Kidney (tissue), 22 donors: ENCODE measurements at regions of chr11 and their contacts with region 1.

Region 1: DNA sequence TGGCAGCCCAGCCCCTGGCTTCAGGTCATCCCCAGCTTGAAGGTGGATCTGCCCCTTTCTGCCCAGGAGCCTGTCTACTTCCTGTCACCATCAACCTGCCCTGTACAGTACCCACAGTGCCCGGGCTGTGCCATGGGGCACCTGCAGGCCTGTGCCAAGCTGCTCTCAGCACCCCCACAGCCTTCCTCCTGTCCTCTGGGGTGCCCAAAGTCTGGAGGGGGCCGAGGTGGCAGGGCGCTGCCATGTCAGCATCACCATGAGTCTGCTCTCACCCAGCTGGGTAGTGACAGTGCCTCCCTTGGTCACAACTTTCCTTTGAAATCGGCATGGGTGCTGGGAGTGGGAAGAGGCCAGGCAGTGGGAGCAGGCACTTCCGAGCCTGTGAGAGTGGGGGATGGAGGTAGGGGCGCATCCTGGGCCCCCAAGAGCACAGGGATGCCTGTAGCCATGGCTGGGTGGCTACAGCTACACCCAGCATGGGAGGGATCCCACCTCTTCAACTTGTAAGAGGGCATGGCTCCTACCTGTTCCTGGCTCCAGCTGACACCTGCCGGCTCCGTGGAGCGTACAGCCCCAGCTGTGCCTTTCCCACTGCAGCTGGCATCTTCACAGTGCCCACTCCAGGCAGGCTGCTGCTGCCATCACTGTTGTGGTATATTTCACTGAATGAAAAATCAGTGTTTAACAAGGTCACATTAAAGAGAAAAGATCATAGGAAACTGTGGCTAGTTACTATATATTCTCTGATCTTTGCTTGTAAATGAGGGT is 42.9 kb downstream of the RNF169 start:
- DNase-seq: no peak
- H3K4me3 ChIP-seq: no peak overlapping the region
- H3K27ac ChIP-seq: no peak overlapping the region
- H3K4me1 ChIP-seq: no peaks in the 10 kb centered on the region
- H3K27me3 ChIP-seq: no peaks in the 10 kb centered on the region
- CTCF ChIP-seq: no peak

Region 2: GRCh38 chr11:74849525-74850391 is 58.2 kb after region 1 on chr11:
- intact Hi-C with region 1: loop called (anchors 10 kb)
- DNase-seq: no peak
- H3K4me3 ChIP-seq: no peak overlapping the region
- H3K27ac ChIP-seq: no peak overlapping the region
- H3K4me1 ChIP-seq: no peaks in the 10 kb centered on the region
- H3K27me3 ChIP-seq: no peaks in the 10 kb centered on the region
- CTCF ChIP-seq: no peak

Region 3: DNA sequence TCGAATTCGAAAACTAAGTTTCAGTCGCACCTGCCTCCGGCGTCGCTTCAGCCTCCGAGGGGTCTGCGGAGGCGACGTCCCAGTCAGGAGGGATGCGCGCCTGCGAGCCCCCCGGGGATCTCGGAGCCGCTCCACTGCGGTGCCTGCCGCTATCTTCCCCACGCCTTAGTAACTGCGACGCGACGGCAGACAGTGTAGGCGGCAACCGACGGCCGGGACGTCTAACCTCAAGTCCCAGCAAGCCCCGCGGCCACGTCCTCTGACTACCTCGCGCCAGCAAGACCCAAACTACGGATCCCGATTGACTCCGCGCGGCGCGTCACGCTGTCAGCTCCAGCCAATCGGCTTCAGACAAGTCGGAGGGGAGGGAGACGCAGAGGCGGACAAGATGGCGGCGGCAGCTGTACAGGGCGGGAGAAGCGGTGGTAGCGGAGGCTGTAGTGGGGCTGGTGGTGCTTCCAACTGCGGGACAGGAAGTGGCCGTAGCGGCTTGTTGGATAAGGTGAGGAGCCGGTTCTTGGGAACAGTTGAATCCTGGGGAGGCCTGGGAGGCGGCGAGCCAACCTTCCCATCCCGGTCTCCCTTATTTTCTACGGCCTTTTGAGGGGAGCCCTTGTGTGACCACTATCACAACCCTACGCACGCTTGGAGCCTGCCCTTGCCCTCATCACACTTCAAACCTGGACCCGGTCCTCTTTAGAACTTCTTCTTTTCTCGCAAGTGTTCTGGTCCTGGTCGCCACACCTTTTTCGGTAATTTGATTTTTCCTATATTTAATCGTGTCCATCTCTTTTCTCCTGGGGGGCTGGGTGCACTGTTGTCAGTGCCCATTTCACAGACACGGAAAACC is 157.6 kb after region 1 on chr11 and contains the starts of genes SPCS2 and XRRA1:
- intact Hi-C with region 1: no loop called
- DNase-seq: peak; percentile 98 to 100 (median 99)
- H3K4me3 ChIP-seq: peak within 1 kb of the TSS; percentile 91 to 98 (median 94)
- H3K27ac ChIP-seq: peak within 1 kb of the TSS; percentile 80 to 82
- H3K4me1 ChIP-seq: peaks cover 0 to 9% (median 7%) of the 10 kb centered on the region in 3 donors
- H3K27me3 ChIP-seq: no peaks in the 10 kb centered on the region
- CTCF ChIP-seq: no peak
- total RNA-seq, gene SPCS2: 176 TPM
- total RNA-seq, gene XRRA1: 14.6 TPM